Endothelial cell of umbilical vein (primary cell): ENCODE measurements at regions of chr9 and their contacts with region 1.

Region 1: DNA sequence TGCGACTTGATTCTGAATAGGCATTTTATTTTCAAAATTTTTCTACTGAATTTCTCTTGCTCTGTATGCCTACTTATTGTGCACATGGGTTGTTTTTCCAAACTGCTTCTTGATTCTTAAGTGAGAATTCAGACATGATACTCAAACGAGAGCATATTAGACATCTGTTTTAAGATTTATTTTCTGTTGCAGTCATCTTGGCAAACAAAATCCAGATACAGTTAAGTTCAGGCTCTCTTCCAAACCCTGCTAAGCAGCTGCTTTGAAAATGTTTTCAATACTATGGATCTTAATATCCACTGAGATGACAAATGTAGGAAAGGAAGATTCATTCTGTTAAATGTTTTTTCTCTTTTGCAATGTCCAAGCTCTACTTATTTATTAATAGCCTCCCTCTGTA is 4.5 kb downstream of the TMEM215 start:
- DNase-seq: no peak
- H3K4me3 ChIP-seq: no peak overlapping the region
- H3K27ac ChIP-seq: no peak overlapping the region
- H3K4me1 ChIP-seq: no peaks in the 10 kb centered on the region
- H3K27me3 ChIP-seq: peaks cover 10 to 28% of the 10 kb centered on the region in 2 experiments
- CTCF ChIP-seq: no peak
- POLR2A ChIP-seq: no peak

Region 2: DNA sequence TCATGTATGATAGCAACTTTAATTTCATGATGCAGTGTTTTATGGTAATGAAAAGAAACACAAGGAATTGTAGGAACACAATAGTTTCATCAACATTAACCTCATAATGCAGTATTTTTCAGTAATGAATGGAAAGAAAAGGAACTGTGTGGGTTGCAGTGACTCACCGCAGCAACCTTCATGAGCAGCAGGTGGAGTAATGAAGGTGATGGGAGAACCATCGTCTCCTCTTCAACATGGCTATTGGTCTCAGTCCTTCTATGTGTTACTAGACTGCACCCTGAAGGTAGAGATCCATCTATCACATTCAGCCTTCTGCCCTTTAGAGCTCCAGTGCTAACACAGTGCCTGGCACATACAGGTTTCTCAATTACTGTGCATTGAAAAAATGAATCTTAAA is 53.5 kb after region 1 on chr9:
- CTCF ChIA-PET with region 1: no interaction called
- POLR2A ChIA-PET with region 1: no interaction called
- dilution Hi-C with region 1: no loop called
- intact Hi-C with region 1: loop called (anchors 5 kb)
- DNase-seq: no peak
- H3K4me3 ChIP-seq: no peak overlapping the region
- H3K27ac ChIP-seq: no peak overlapping the region
- H3K4me1 ChIP-seq: no peaks in the 10 kb centered on the region
- H3K27me3 ChIP-seq: no peaks in the 10 kb centered on the region
- CTCF ChIP-seq: no peak
- POLR2A ChIP-seq: no peak